Right cardiac atrium (tissue), 5 donors: ENCODE measurements at regions of chr1 and their contacts with region 1.

Region 1: DNA sequence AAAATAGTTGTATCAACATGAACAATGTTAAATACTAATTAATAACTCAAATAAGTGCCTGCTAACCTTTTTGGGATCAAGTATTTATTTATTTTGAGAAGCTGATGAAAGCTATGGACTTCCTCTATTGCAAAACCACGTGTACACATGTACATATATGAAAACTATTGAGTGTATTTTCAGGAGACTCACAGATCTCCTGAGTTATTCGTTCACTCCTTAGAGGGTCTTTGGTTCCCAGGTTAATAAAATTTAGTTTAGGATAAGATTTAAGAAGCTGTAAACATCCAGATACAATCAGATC is 130.5 kb downstream of the DISC1 start:
- DNase-seq: no peak
- ATAC-seq: peak in 1 of 2 donors; percentile 40
- H3K4me3 ChIP-seq: no peak overlapping the region
- H3K27ac ChIP-seq: no peak overlapping the region
- H3K4me1 ChIP-seq: no peaks in the 10 kb centered on the region
- H3K27me3 ChIP-seq: no peaks in the 10 kb centered on the region

Region 2: GRCh38 chr1:231806623-231807495 is 49.8 kb after region 1 on chr1:
- intact Hi-C with region 1: loop called in 1 of 4 experiments (anchors 10 kb)
- DNase-seq: peak; percentile 60 to 79 (median 72)
- ATAC-seq: peak; percentile 70 to 72
- H3K4me3 ChIP-seq: no peak overlapping the region
- H3K27ac ChIP-seq: no peak overlapping the region
- H3K4me1 ChIP-seq: peaks cover 4% of the 10 kb centered on the region
- H3K27me3 ChIP-seq: no peaks in the 10 kb centered on the region

Region 3: DNA sequence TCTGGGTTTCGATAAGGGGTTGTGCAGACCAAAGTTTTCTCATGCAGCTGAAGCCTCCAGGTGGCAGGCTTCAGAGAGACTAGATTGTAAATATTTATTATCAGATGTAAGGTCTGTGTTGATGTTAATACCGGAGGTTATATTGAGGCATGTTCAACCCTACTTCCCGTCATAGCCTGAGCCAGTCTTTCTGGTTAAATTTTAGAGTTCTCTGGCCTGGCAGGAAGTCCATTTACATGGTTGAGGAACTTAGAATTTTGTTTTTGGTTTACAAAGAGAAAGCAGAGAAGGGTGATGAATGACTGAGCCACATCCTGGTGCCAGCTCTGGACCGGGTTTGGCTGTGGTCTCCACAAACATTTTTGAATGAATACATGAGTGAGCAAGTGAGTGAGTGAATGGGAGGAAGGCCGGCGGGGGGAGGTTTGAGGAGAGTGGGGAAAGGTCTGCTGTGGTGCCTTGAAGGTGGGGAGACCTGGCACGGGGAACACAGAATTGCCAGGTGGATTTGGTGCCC is 88.0 kb after region 1 on chr1:
- intact Hi-C with region 1: loop called in 1 of 4 experiments (anchors 10 kb)
- DNase-seq: peak in 2 of 3 donors; percentile 17 to 50
- ATAC-seq: peak in 1 of 2 donors; percentile 7
- H3K4me3 ChIP-seq: peak overlapping the region; percentile 73
- H3K27ac ChIP-seq: peak overlapping the region; percentile 9
- H3K4me1 ChIP-seq: peaks cover 3% of the 10 kb centered on the region
- H3K27me3 ChIP-seq: no peaks in the 10 kb centered on the region

Region 4: DNA sequence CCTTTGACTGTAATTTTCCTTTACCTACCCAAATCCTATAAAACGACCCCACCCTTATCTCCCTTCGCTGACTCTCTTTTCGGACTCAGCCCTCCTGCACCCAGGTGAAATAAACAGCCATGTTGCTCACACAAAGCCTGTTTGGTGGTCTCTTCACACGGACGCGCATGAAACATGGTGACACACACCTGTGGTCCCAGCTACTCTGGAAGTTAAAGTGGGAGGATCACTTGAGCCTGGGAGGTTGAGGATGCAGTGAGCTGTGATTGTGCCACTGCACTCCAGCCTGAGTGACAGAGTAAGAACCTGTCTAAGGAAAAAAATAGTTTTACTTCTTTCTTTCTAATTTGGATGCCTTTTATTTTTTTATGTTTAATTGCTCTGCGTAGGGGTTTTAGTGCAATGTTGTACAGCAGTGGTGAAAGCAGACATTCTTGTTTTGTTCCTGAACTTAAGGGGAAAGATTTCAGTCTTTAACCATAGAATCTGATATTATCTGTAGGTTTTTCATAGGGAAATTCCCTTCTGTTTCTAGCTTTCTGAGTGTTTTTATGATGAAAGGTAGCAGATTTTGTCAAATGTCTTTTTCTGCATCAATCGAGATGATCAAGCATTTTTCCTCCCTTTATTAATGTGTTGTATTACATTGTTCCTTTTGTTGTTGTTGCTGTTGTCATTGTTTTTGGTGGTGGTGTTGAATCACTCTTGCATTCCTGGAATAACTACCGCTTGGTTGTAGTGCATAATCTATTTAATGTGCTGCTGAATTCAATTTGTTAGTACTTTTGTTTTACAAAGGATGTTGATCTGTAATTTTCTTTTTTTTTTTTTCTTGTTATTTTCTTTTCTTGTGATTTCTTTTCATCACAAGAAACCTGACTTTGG is 367.0 kb after region 1 on chr1:
- intact Hi-C with region 1: no loop called
- DNase-seq: no peak
- ATAC-seq: no peak
- H3K4me3 ChIP-seq: no peak overlapping the region
- H3K27ac ChIP-seq: no peak overlapping the region
- H3K4me1 ChIP-seq: no peaks in the 10 kb centered on the region
- H3K27me3 ChIP-seq: no peaks in the 10 kb centered on the region